ENCODE measurements at regions of chr6 and their contacts with region 1.

Region 1: GRCh38 chr6:28443112-28443773 is at the start of gene ZSCAN23:
- DNase-seq: peak; percentile 68 to 94 (median 80)
- ATAC-seq: peak; percentile 91
- H3K4me3 ChIP-seq: peak within 1 kb of the TSS; percentile 53
- H3K4me3 Mint-ChIP-seq: peak within 1 kb of the TSS; percentile 96
- H3K27ac ChIP-seq: no peak within 1 kb of the TSS
- H3K27ac Mint-ChIP-seq: peak within 1 kb of the TSS; percentile 77
- H3K4me1 ChIP-seq: peaks cover 19% of the 10 kb centered on the region
- H3K4me1 Mint-ChIP-seq: peaks cover 34% of the 10 kb centered on the region
- H3K27me3 ChIP-seq: peaks cover 19 to 28% of the 10 kb centered on the region in 2 experiments
- H3K27me3 Mint-ChIP-seq: peaks cover 37% of the 10 kb centered on the region
- CTCF ChIP-seq: no peak
- total RNA-seq, gene ZSCAN23: 0.19 to 0.78 TPM

Region 2: DNA sequence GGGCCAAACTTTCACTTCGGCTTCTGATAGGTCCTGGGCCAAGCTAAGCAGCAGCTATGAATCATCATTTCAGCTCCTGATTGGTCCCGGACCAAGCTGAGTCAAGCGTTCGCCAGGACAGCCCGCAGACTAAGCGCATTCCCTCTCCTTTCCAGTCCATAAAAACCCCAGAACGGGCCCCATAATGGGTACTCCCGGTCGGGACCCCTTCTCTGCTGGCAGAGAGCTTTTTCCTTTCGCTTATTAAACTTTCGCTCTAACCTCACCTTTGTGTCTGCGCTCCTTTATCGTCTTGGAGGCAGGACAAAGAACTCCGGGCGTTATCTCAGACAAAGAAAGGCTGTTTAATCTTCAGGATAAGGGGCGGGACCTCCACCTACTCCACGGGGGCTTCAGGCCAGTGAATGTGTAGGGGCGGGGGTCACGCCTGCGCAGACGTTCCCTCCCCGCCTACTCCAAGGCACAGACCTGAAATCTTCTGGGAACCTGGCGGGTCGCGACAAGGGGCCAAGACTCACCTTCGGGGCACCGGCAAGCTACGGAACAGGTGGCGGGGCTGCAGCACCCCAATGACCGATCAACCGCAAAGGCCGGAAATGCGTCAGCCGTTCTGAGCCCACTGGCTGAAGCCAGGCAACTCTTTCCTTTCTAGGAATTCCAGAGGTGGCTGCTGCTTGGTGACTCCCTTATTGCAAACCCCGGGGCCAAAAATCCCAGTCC is 107.5 kb before region 1 on chr6 and contains the start of gene ZSCAN31:
- CTCF ChIA-PET with region 1: no interaction called
- POLR2A ChIA-PET with region 1: no interaction called
- intact Hi-C with region 1: loop called in 1 of 2 experiments (anchors 10 kb)
- DNase-seq: peak; percentile 59 to 96 (median 72)
- ATAC-seq: peak; percentile 91
- H3K4me3 ChIP-seq: peak within 1 kb of the TSS; percentile 65
- H3K4me3 Mint-ChIP-seq: no peak within 1 kb of the TSS
- H3K27ac ChIP-seq: peak within 1 kb of the TSS; percentile 81 to 85
- H3K27ac Mint-ChIP-seq: no peak within 1 kb of the TSS
- H3K4me1 ChIP-seq: peaks cover 23% of the 10 kb centered on the region
- H3K4me1 Mint-ChIP-seq: peaks cover 5% of the 10 kb centered on the region
- H3K27me3 ChIP-seq: no peaks in the 10 kb centered on the region
- H3K27me3 Mint-ChIP-seq: no peaks in the 10 kb centered on the region
- CTCF ChIP-seq: no peak
- total RNA-seq, gene ZSCAN31: 0.88 to 1.1 TPM

Region 3: GRCh38 chr6:28349892-28350737 is 93.1 kb before region 1 on chr6 and contains the start of gene ZKSCAN3:
- CTCF ChIA-PET with region 1: no interaction called
- POLR2A ChIA-PET with region 1: no interaction called
- intact Hi-C with region 1: loop called in 1 of 2 experiments (anchors 5 kb)
- DNase-seq: peak; percentile 65 to 89 (median 80)
- ATAC-seq: peak; percentile 100
- H3K4me3 ChIP-seq: peak within 1 kb of the TSS; percentile 73
- H3K4me3 Mint-ChIP-seq: peak within 1 kb of the TSS; percentile 99
- H3K27ac ChIP-seq: peak within 1 kb of the TSS in 1 of 2 donors; percentile 46
- H3K27ac Mint-ChIP-seq: peak within 1 kb of the TSS; percentile 85
- H3K4me1 ChIP-seq: peaks cover 13% of the 10 kb centered on the region
- H3K4me1 Mint-ChIP-seq: peaks cover 43% of the 10 kb centered on the region
- H3K27me3 ChIP-seq: peaks cover 0 to 11% of the 10 kb centered on the region in 2 experiments
- H3K27me3 Mint-ChIP-seq: peaks cover 27% of the 10 kb centered on the region
- CTCF ChIP-seq: no peak
- total RNA-seq, gene ZKSCAN3: 0.88 to 0.89 TPM

Region 4: GRCh38 chr6:28537509-28538140 is 94.4 kb after region 1 on chr6:
- CTCF ChIA-PET with region 1: no interaction called
- POLR2A ChIA-PET with region 1: no interaction called
- intact Hi-C with region 1: loop called in 1 of 2 experiments (anchors 5 kb)
- DNase-seq: peak in 8 of 14 experiments; percentile 20 to 70 (median 44)
- ATAC-seq: peak; percentile 78
- H3K4me3 ChIP-seq: peak overlapping the region; percentile 15
- H3K4me3 Mint-ChIP-seq: peak overlapping the region; percentile 85
- H3K27ac ChIP-seq: no peak overlapping the region
- H3K27ac Mint-ChIP-seq: peak overlapping the region; percentile 92
- H3K4me1 ChIP-seq: peaks cover 5% of the 10 kb centered on the region
- H3K4me1 Mint-ChIP-seq: peaks cover 33% of the 10 kb centered on the region
- H3K27me3 ChIP-seq: peaks cover 8 to 20% of the 10 kb centered on the region in 2 experiments
- H3K27me3 Mint-ChIP-seq: peaks cover 75% of the 10 kb centered on the region
- CTCF ChIP-seq: no peak

Measured in CD4-positive, alpha-beta T cell (primary cell).